ENCODE measurements at regions of chr3 and their contacts with region 1.

Region 1: DNA sequence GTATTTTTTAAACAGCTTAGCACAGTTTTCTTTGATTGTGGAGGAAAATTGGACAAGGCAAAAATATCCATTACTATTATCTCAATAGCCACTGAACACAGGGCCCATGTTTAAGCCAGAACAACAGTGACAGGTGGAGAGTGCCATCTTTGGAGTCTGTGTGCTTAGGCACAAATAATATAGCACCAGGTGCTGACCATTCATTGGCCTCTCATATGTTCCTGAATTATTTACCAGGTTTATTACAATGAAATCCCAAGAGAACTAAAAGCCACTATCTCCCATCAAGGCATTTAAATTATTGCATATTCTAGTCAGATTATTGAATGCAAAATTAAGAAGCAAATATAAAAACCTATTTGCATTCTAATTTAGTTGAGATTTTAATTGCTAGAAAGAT is 39.6 kb downstream of the GPR156 start:
- DNase-seq: no peak
- H3K4me3 ChIP-seq: no peak overlapping the region
- H3K27ac ChIP-seq: no peak overlapping the region
- H3K27me3 ChIP-seq: no peaks in the 10 kb centered on the region
- CTCF ChIP-seq: no peak

Region 2: DNA sequence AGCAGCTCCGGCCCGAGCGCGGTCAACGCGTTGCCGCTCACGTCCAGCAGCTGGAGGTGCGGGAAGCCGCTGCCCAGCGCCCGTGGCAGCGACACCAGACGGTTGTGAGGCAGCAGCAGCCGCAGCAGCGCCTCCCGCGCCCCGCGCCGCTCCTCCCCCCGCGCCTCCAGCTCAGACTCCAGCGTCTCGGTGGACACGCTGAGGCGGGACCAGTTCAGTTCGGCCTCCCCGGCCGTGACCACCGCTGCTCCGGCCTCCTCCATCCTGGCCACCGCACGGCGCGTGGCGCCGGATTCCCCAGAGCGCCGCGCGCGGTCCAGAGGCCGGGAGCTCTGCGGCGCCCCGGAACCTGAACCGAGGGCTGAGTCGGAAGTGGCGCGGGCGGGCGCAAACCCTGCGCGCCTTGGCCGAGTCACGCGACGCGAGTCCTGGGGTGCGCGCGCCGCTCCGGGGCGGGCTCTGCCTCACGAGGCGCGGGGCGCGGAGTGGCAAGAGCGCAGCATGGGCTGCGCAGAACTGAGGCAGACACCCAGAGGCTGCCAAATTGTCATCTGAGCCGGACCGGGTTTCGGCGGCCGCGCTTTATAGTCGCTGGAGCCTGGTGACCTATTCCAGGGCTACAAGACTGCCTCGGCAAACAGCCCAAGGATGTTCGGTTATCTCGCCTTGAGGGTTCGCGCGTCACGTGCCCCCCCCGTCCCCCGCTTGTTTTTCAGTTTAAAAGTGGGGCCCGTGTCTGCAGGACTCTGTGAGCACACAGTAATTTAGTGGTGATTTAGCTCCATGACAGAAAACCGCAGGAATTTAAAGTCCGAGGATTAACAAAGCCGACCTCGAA is 103.8 kb after region 1 on chr3 and contains the start of gene LRRC58:
- intact Hi-C with region 1: loop called in 1 of 2 experiments (anchors 5 kb)
- DNase-seq: peak; percentile 71 to 89 (median 82)
- H3K4me3 ChIP-seq: peak within 1 kb of the TSS; percentile 64 to 99 (median 90)
- H3K27ac ChIP-seq: peak within 1 kb of the TSS; percentile 65 to 99 (median 96)
- H3K27me3 ChIP-seq: no peaks in the 10 kb centered on the region
- CTCF ChIP-seq: peak in 51 of 56 donors; percentile 4 to 70 (median 46)
- total RNA-seq, gene LRRC58: 15.6 to 29.6 (median 20.9) TPM

Region 3: DNA sequence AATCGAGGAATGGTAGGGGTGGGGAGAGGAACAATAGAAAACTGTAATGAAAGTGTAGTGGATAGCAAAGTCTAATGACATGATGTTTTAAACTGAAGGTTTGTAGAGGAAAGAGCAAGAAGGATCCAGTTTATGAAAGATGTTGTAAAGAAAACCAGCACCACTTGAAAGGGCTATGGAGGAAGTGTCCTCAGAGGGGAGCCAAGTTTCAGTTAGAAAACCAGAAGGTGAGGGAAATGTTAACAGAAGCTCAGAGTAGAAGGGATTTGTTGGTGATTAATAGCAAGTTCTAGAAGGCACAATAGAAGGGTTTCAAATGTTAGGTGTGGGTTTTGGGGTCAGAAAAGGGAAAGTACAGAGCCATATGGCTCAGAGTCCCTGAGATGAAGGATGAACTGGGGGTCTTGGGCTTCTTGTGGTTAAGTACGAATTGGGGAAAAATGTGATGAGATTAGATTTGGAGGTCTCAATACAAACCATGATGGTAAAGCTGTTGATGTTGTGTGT is 137.6 kb after region 1 on chr3:
- intact Hi-C with region 1: no loop called
- DNase-seq: no peak
- H3K4me3 ChIP-seq: no peak overlapping the region
- H3K27ac ChIP-seq: no peak overlapping the region
- H3K27me3 ChIP-seq: no peaks in the 10 kb centered on the region
- CTCF ChIP-seq: no peak

Region 4: DNA sequence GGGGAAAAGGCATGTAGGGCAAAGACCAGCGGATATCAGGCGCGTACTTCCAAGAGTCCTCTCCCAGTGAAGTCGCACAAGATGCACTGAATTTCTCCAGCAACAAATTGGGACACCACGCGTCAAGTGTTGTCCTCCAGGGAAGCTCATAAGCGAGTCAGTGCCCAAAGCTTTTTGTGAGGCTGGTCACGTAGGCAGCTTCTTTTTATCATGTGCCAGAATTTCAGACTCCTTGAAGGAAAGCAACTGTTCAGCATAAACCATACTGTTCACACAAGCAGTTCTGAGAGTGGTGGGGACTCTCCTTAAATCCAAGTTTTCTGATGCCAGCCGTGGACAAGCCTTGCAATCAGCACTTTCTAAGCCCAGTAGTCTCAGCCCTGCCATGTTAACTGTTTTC is 215.5 kb after region 1 on chr3:
- intact Hi-C with region 1: no loop called
- DNase-seq: peak in 4 of 10 donors; percentile 37 to 48 (median 41)
- H3K4me3 ChIP-seq: peak overlapping the region in 34 of 59 donors; percentile 1 to 46 (median 24)
- H3K27ac ChIP-seq: peak overlapping the region in 7 of 59 donors; percentile 8 to 27 (median 20)
- H3K27me3 ChIP-seq: no peaks in the 10 kb centered on the region
- CTCF ChIP-seq: no peak